Mammary epithelial cell (primary cell): ENCODE measurements at regions of chr2 and their contacts with region 1.

Region 1: DNA sequence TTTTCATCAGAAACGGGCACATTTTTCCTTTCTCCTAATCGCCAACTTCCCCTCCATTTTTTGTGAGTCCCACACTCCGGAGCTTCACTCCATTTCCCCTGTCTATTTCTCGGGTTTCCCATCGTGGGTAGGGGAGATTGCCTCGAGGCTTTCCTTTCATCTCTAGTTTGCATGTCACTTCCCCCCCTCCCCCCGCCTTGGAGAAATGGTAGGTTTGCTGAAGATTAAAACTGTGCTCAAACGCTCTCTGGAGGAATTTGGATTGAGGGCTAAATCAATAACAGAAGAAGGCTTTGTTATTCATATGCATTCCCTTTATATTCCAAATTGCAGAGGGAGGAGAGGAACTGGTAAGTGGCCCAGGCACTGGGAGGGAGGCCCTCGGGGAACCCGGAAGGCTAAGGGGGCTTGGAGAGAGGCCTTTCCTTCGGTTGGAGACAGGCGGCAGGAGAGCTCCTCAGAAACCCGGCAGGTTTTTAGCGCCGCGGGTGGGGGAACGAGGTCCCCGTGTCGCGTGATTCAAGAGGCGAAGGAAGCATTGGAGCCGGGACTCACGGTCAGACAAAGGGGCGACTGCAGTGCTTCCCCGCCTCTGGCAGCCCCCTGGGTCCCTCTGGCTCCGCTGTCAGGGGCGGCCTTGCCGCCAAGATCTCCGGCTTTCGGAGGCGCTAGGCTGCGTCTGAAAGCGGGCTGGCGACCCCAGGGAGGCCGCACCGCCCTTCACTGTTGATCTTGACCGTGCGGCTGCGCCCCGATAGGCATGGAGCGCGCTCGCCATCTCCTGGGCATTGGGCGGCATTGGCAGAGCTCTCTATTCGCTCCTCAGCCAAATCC is 2.4 kb upstream of the HOXD12 start:
- DNase-seq: peak; percentile 37
- H3K4me3 ChIP-seq: peak overlapping the region in 2 of 3 experiments; percentile 8 to 42
- H3K27ac ChIP-seq: no peak overlapping the region
- H3K4me1 ChIP-seq: peaks cover 8% of the 10 kb centered on the region
- H3K27me3 ChIP-seq: peaks cover 90% of the 10 kb centered on the region
- CTCF ChIP-seq: peak; percentile 72 to 90

Region 2: GRCh38 chr2:174697255-174697654 is 1399.9 kb before region 1 on chr2:
- CTCF ChIA-PET with region 1: no interaction called
- dilution Hi-C with region 1: no loop called
- in situ Hi-C with region 1: no loop called
- intact Hi-C with region 1: loop called (anchors 5 kb)
- DNase-seq: peak; percentile 40
- H3K4me3 ChIP-seq: no peak overlapping the region
- H3K27ac ChIP-seq: no peak overlapping the region
- H3K4me1 ChIP-seq: no peaks in the 10 kb centered on the region
- H3K27me3 ChIP-seq: peaks cover 7% of the 10 kb centered on the region
- CTCF ChIP-seq: peak; percentile 73 to 88

Region 3: DNA sequence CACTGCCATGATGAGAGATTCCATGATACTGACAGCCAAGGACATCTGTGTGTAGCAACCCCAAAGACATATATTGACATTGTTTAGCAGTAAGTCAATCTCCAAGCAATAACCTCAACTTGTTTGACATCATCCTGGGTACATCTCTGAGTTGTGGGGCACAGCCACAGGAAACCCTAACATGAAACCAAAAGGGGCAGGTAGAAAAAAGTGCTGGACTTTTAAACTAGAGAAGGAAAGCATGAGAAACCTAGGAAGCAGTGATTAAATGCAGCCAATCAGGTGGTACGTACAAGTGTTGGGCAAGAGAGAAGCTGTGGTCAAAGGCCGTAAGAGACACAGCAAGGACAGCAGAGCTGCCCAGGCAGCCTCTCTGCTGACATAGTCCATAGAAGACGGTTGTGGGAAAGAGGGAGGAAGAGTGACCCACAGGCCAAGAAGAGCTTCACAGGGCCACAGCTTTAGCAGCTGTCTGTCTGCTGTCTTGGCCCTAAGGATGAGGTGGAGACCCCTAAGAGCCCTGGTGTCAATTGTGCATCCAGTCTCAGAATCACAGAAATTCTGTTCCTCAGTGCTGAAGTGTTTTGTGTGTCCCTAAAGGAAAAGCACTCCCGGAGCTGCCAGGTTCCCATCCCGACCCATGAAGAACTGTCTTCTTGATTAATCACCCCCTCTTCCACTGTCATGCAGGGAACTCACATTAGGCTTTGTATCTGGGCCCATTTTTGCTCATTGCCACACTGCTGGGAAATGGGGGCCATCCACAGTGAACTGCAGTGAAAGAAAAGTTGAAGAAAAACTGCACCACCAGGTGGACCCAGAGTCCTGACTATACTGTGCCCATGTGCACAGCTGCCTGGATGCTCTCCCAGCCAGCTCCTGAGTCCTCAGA is 1066.6 kb before region 1 on chr2:
- CTCF ChIA-PET with region 1: no interaction called
- dilution Hi-C with region 1: no loop called
- in situ Hi-C with region 1: loop called in 1 of 2 experiments (anchors 25 kb)
- intact Hi-C with region 1: loop called (anchors 1 kb)
- DNase-seq: peak; percentile 31
- H3K4me3 ChIP-seq: no peak overlapping the region
- H3K27ac ChIP-seq: no peak overlapping the region
- H3K4me1 ChIP-seq: no peaks in the 10 kb centered on the region
- H3K27me3 ChIP-seq: no peaks in the 10 kb centered on the region
- CTCF ChIP-seq: peak; percentile 29 to 54

Region 4: GRCh38 chr2:175203621-175204496 is 893.3 kb before region 1 on chr2:
- CTCF ChIA-PET with region 1: interaction called, 5 read pairs
- dilution Hi-C with region 1: no loop called
- in situ Hi-C with region 1: no loop called
- intact Hi-C with region 1: loop called (anchors 5 kb)
- DNase-seq: peak; percentile 29
- H3K4me3 ChIP-seq: no peak overlapping the region
- H3K27ac ChIP-seq: no peak overlapping the region
- H3K4me1 ChIP-seq: no peaks in the 10 kb centered on the region
- H3K27me3 ChIP-seq: peaks cover 2% of the 10 kb centered on the region
- CTCF ChIP-seq: peak; percentile 57 to 69

Region 5: GRCh38 chr2:175309799-175310198 is 787.4 kb before region 1 on chr2:
- CTCF ChIA-PET with region 1: interaction called, 3 read pairs
- dilution Hi-C with region 1: no loop called
- in situ Hi-C with region 1: no loop called
- intact Hi-C with region 1: loop called (anchors 1 kb)
- DNase-seq: no peak
- H3K4me3 ChIP-seq: no peak overlapping the region
- H3K27ac ChIP-seq: no peak overlapping the region
- H3K4me1 ChIP-seq: no peaks in the 10 kb centered on the region
- H3K27me3 ChIP-seq: no peaks in the 10 kb centered on the region
- CTCF ChIP-seq: peak; percentile 18 to 57

Region 6: GRCh38 chr2:175414882-175415487 is 682.2 kb before region 1 on chr2:
- CTCF ChIA-PET with region 1: no interaction called
- dilution Hi-C with region 1: no loop called
- in situ Hi-C with region 1: no loop called
- intact Hi-C with region 1: loop called (anchors 1 kb)
- DNase-seq: peak; percentile 41
- H3K4me3 ChIP-seq: no peak overlapping the region
- H3K27ac ChIP-seq: no peak overlapping the region
- H3K4me1 ChIP-seq: no peaks in the 10 kb centered on the region
- H3K27me3 ChIP-seq: no peaks in the 10 kb centered on the region
- CTCF ChIP-seq: peak; percentile 48 to 57

Region 7: GRCh38 chr2:176056406-176056805 is 40.8 kb before region 1 on chr2:
- CTCF ChIA-PET with region 1: no interaction called
- dilution Hi-C with region 1: no loop called
- in situ Hi-C with region 1: no loop called
- intact Hi-C with region 1: no loop called
- DNase-seq: no peak
- H3K4me3 ChIP-seq: no peak overlapping the region
- H3K27ac ChIP-seq: no peak overlapping the region
- H3K4me1 ChIP-seq: no peaks in the 10 kb centered on the region
- H3K27me3 ChIP-seq: peaks cover 2% of the 10 kb centered on the region
- CTCF ChIP-seq: no peak

Region 8: DNA sequence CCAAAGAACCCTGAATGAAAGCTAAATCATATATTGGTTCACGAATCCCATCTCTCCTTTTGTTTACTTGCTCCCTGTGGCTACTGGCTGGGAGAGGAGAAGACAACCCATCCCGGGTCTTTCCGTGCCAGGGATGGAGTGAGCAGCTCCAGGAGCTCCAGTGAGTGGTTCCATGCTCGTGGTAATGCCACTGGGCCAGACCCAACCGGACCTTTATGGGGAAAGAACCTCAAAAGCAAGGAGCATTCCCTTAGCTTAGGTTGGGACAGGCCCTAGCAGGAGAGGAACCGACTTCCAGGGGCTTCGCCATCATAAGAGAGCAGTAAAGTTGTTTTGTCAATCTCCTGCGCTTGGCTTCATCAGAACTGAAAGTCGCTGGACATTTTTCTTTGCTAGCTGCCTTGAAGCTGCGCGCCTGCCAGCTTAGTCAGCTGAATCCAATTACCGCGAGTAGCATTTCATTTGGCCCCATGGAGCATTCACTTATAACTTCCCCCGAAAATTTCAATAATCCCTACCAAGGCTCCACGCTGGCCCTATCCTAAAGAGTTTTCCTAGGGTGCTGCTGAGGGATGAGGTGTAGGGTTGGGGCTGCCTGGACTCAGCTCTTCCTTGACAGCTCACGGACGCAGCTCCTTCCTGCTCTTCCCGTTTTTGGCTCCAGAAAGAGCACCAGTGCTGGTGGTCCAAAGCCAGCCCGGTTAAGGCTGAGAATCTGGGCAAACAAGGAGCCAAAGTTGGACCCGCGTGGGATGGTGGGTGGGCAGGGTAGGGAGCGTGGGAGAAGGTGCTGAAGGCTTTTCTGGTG is 64.8 kb after region 1 on chr2:
- CTCF ChIA-PET with region 1: no interaction called
- dilution Hi-C with region 1: no loop called
- in situ Hi-C with region 1: no loop called
- intact Hi-C with region 1: no loop called
- DNase-seq: peak; percentile 27
- H3K4me3 ChIP-seq: no peak overlapping the region
- H3K27ac ChIP-seq: no peak overlapping the region
- H3K4me1 ChIP-seq: no peaks in the 10 kb centered on the region
- H3K27me3 ChIP-seq: peaks cover 83% of the 10 kb centered on the region
- CTCF ChIP-seq: no peak